Activated CD4-positive, alpha-beta T cell treated with anti-CD3 and anti-CD28 coated beads, Interleukin-2, amount 10 ng/mL, durations not matched to agents 7 days and 5 days (primary cell): ENCODE measurements at regions of chr17 and their contacts with region 1.

Region 1: DNA sequence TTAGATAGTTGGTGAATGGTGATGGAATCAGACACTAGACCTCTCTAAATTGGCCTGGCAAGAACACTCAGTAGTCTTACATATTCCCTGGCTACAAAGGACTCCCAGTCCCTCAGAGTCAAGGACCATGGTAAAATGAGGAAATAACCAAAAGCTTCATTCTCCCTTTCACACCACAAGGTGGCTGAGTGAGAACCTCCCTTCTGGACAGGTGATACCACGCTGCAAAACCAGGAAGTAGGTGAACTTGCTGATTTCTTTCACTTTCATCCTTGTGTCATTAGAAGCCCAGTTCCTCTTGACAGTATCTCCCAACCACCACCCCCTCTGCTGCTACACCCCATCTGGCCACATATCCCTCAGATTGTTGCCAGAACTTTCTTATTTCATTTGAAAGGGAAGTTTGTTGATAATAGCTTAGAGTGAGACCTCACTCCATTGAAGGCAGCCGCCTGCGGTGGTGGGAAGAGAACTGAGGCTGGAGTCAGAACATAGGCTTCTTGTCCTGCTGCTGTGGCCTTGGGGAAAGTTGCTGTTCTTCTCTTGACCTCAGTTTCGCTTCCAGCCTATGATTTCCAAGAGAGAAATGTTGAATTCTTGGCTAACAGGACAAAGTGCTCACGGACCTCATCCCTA is 290.6 kb upstream of the CCL2 start:
- DNase-seq: peak; percentile 60
- H3K4me3 Mint-ChIP-seq: peak overlapping the region; percentile 11
- H3K27ac Mint-ChIP-seq: peak overlapping the region; percentile 78
- H3K4me1 Mint-ChIP-seq: peaks cover 62% of the 10 kb centered on the region
- H3K27me3 Mint-ChIP-seq: peaks cover 7% of the 10 kb centered on the region

Region 2: GRCh38 chr17:33981711-33982601 is 17.5 kb after region 1 on chr17:
- CTCF ChIA-PET with region 1: interaction called, 14 read pairs
- POLR2A ChIA-PET with region 1: no interaction called
- DNase-seq: no peak
- H3K4me3 Mint-ChIP-seq: no peak overlapping the region
- H3K27ac Mint-ChIP-seq: no peak overlapping the region
- H3K4me1 Mint-ChIP-seq: no peaks in the 10 kb centered on the region
- H3K27me3 Mint-ChIP-seq: no peaks in the 10 kb centered on the region